HCT116 (cell line): ENCODE measurements at regions of chr5 and their contacts with region 1.

Region 1: DNA sequence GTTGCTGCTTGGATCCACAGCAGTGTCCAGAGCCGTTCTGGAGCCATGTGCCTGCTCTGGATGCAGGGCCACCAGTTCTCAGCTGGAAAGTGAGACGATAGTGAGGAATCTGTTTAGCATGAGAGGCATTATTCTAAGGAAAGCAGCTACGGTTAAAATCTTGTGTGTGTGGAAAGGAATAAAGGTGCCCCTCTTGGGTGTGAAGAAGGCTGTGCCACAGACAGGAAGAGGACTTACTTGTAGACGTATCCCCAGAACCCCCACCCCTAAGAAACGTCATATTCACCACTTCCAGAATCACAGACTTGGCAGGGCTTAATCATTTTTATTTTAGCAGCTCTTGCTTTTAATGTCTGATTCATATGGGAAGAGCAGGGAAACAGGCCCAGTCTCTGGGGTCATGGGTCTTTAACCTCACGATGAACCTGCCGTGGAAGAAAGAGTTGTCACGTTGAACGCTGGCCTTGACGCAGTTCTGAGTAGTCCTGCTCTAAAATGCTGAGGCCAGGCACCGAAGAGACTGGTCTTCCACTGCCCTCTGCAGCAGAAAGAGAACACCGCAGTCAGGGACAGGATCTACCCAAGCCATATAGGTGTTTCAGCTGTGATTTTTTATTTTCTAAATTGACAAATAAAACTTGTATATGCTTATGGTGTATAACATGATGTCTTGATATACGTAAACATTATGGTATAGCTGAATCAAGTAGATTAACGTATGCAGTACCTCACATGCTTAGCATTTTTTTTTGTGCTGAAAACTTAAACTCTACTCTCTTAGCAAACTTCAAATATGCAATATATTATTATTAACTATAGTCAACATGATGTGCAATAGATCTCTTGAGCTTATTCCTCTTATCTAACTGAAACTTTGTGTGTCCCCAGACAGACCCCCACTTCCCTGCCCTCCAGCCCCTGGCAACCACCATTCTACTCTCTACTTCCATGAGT is 38.8 kb downstream of the CARTPT start:
- DNase-seq: peak; percentile 61
- ATAC-seq: peak; percentile 100
- H3K4me3 ChIP-seq: no peak overlapping the region
- H3K27ac ChIP-seq: no peak overlapping the region
- H3K4me1 ChIP-seq: peaks cover 0 to 7% of the 10 kb centered on the region in 2 experiments; a peak in 1 of 4 replicates
- H3K27me3 ChIP-seq: no peaks in the 10 kb centered on the region
- CTCF ChIP-seq: peak; percentile 77 to 88 (median 84); a peak in 5 of 6 replicates
- POLR2A ChIP-seq: no peak
- RAD21 ChIP-seq: peak; percentile 95

Region 2: DNA sequence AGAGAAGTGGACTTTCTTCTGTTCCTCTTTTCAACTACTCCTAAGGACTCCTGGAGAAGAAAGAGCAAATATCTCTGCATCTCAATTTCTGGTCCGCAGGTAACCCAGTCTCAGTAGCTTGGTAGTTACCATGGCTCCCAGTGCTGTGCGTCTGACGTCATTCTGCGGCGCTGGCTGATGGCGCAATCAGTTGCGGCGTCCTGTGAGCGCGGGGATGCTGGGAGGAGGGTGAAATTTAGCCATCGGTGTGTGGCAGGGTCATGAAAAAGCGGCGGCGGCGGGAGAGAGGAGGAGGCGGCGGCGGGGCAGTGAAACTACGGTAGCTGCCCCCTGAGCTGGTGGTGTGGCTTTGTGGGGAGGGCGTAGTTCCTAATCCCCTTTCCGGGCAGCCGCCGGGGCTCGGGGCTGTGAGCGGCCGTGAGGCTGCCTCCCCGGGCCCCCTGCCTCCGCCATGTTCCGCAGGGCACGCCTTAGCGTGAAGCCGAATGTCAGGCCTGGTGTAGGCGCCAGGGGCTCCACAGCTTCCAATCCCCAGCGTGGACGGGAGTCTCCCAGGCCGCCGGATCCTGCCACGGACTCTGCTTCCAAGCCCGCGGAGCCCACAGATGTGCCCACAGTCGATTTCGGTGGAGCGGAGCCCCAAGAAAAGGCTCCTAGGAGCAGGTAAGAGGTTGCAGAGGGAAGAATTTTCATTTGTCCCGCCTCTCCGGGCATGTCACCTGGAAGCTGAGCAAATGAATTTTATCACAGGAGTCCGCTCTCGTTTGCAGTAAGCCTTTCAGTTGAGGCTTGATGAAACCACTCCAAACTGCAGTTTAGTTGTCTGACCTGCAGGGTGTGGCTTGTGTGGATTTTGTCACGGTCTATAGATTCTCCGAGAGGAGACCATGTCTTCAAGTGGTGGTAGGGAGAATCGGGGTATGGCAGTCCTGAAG is 302.2 kb before region 1 on chr5 and contains the start of gene BDP1:
- CTCF ChIA-PET with region 1: interaction called, 3 read pairs
- POLR2A ChIA-PET with region 1: no interaction called
- RAD21 ChIA-PET with region 1: no interaction called
- intact Hi-C with region 1: loop called (anchors 5 kb)
- DNase-seq: peak; percentile 92
- ATAC-seq: peak; percentile 90
- H3K4me3 ChIP-seq: peak within 1 kb of the TSS; percentile 66 to 96
- H3K27ac ChIP-seq: peak within 1 kb of the TSS; percentile 72
- H3K4me1 ChIP-seq: peaks cover 7 to 13% of the 10 kb centered on the region in 2 experiments; a peak in 3 of 4 replicates
- H3K27me3 ChIP-seq: no peaks in the 10 kb centered on the region
- CTCF ChIP-seq: peak in 2 of 3 experiments; percentile 26 to 28; a peak in 2 of 6 replicates
- POLR2A ChIP-seq: peak; percentile 53
- RAD21 ChIP-seq: no peak
- total RNA-seq, gene BDP1: 22.0 TPM

Region 3: DNA sequence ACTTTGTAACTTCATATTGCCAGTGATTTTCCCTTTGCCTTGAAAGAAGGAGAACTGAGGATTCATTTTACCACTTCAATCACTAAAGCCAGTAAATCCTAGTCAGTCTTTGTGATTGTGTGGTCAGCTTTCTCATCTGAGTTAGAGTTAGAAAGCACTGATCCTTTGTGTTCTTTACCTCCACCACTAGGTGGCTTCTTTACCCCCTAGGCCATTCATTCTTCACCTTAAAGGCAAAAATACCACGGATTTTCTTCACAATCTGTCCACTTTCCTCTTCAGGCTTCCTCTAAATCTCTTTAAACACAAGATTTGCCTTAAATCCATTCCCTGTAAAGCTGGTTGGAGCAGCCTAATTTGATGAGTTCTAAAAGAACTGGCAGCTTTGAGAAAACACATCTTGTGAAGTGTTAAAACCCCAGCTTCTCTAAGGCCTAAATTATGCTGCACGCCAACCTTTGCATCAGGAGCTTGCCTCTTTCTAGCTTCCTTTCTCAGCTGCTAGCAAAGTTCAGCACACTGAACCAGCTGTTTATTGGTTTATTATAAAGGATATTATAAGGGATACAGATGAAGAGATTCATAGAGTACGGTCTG is 282.0 kb before region 1 on chr5:
- CTCF ChIA-PET with region 1: interaction called, 21 read pairs
- POLR2A ChIA-PET with region 1: no interaction called
- RAD21 ChIA-PET with region 1: interaction called, 4 to 7 read pairs
- intact Hi-C with region 1: loop called (anchors 1 kb)
- DNase-seq: no peak
- ATAC-seq: peak; percentile 83
- H3K4me3 ChIP-seq: no peak overlapping the region
- H3K27ac ChIP-seq: no peak overlapping the region
- H3K4me1 ChIP-seq: peaks cover 13 to 15% of the 10 kb centered on the region in 2 experiments
- H3K27me3 ChIP-seq: no peaks in the 10 kb centered on the region
- CTCF ChIP-seq: peak; percentile 46 to 80 (median 77); a peak in 5 of 6 replicates
- POLR2A ChIP-seq: no peak
- RAD21 ChIP-seq: peak; percentile 54

Region 4: DNA sequence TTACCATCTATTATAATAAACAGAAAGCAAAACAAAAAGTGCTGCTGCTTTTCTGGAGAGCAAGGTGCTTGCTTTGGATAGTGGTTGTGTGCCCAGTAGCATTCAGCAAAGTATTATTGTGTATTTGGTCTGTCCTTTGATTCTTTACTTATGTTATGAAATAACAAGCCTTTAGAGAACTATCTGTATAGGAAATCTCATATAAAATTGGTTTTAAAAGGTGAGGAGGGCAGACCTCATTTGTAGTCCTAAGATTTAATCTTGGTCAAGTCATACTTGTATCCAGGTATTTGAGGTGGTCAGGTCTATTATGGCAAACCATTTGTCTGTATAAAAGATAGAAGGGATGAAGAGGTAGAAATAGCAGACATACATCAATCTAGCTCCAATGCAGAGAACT is 249.1 kb before region 1 on chr5:
- CTCF ChIA-PET with region 1: no interaction called
- POLR2A ChIA-PET with region 1: no interaction called
- RAD21 ChIA-PET with region 1: no interaction called
- intact Hi-C with region 1: loop called (anchors 10 kb)
- DNase-seq: no peak
- ATAC-seq: no peak
- H3K4me3 ChIP-seq: no peak overlapping the region
- H3K27ac ChIP-seq: no peak overlapping the region
- H3K4me1 ChIP-seq: no peaks in the 10 kb centered on the region
- H3K27me3 ChIP-seq: no peaks in the 10 kb centered on the region
- CTCF ChIP-seq: no peak
- POLR2A ChIP-seq: no peak
- RAD21 ChIP-seq: no peak

Region 5: DNA sequence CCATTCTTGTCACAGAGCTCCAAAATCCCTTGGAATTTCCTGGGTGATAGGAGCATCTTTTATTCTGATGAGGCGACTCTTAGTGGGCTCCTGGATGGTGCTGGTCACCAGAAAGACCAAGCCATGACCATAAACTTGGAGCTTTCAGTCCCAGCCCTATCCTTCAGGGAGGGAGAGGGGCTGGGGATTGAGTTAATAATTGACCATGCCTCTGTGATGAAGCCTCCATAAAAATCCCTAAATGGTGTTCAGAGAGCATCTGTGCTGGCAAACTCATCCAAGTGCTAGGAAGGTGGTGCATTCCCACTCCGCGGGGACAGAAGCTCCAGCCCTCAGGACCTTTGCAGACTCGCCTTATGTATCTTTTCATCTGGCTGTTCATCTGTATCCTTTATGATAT is 142.1 kb before region 1 on chr5:
- CTCF ChIA-PET with region 1: no interaction called
- POLR2A ChIA-PET with region 1: no interaction called
- RAD21 ChIA-PET with region 1: no interaction called
- intact Hi-C with region 1: loop called (anchors 10 kb)
- DNase-seq: no peak
- ATAC-seq: no peak
- H3K4me3 ChIP-seq: no peak overlapping the region
- H3K27ac ChIP-seq: no peak overlapping the region
- H3K4me1 ChIP-seq: peaks cover 0 to 4% of the 10 kb centered on the region in 2 experiments; a peak in 1 of 4 replicates
- H3K27me3 ChIP-seq: no peaks in the 10 kb centered on the region
- CTCF ChIP-seq: no peak
- POLR2A ChIP-seq: no peak
- RAD21 ChIP-seq: no peak